MCF 10A (cell line): ENCODE measurements at regions of chr6 and their contacts with region 1.

Region 1: DNA sequence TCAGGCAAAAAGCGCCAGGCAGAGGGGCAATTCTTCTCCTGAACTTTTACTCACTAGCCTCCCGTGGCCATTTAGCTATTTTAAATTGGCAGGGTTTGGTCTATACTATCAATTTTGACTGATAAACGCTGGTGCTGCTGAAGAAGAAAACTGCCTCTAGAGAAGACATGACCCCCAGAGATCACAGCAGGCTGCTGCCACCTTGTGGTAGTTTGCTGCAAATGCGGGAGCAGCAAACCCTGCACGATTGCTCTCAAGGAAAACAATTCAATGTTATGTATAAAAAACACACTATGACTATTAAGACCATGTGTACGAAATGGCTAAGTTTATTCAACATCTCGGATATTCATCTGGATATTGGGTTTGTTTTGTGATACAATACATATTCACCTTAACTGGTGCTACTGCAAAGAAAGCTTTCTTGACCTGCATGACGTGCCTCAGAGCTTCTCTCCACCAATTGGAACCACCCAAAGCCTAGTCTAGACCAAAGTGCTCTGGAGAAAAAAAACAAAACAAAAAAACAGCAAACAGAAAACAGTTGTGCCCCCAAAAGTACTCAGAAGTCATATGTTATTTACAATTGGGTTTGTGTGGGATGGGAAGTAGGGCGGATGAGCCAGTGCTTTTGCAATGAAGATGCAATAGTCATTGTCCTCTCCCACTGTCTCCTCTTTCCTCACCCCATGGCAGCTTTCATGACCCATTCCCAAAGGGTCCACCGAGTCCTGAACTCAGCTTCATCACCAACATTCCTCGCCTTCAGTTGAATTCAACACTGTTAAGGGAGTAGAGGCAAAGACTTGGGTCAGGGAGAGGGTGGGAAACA is 19.6 kb upstream of the IL17F start:
- DNase-seq: peak; percentile 65
- H3K4me3 Mint-ChIP-seq: no peak overlapping the region
- H3K27ac Mint-ChIP-seq: peak overlapping the region; percentile 16
- H3K4me1 Mint-ChIP-seq: no peaks in the 10 kb centered on the region
- H3K27me3 Mint-ChIP-seq: no peaks in the 10 kb centered on the region
- CTCF ChIP-seq: peak; percentile 90

Region 2: GRCh38 chr6:52155791-52156576 is 107.9 kb before region 1 on chr6:
- CTCF ChIA-PET with region 1: interaction called, 178 read pairs
- POLR2A ChIA-PET with region 1: no interaction called
- intact Hi-C with region 1: no loop called
- DNase-seq: no peak
- H3K4me3 Mint-ChIP-seq: no peak overlapping the region
- H3K27ac Mint-ChIP-seq: no peak overlapping the region
- H3K4me1 Mint-ChIP-seq: peaks cover 31% of the 10 kb centered on the region
- H3K27me3 Mint-ChIP-seq: no peaks in the 10 kb centered on the region
- CTCF ChIP-seq: no peak

Region 3: GRCh38 chr6:52176550-52176949 is 87.4 kb before region 1 on chr6:
- CTCF ChIA-PET with region 1: interaction called, 14 read pairs
- POLR2A ChIA-PET with region 1: no interaction called
- intact Hi-C with region 1: no loop called
- DNase-seq: no peak
- H3K4me3 Mint-ChIP-seq: no peak overlapping the region
- H3K27ac Mint-ChIP-seq: no peak overlapping the region
- H3K4me1 Mint-ChIP-seq: no peaks in the 10 kb centered on the region
- H3K27me3 Mint-ChIP-seq: no peaks in the 10 kb centered on the region
- CTCF ChIP-seq: no peak

Region 4: GRCh38 chr6:52243282-52243893 is 20.5 kb before region 1 on chr6:
- CTCF ChIA-PET with region 1: interaction called, 48 read pairs
- POLR2A ChIA-PET with region 1: interaction called, 4 read pairs
- intact Hi-C with region 1: no loop called
- DNase-seq: peak; percentile 29
- H3K4me3 Mint-ChIP-seq: no peak overlapping the region
- H3K27ac Mint-ChIP-seq: no peak overlapping the region
- H3K4me1 Mint-ChIP-seq: no peaks in the 10 kb centered on the region
- H3K27me3 Mint-ChIP-seq: peaks cover 9% of the 10 kb centered on the region
- CTCF ChIP-seq: no peak

Region 5: DNA sequence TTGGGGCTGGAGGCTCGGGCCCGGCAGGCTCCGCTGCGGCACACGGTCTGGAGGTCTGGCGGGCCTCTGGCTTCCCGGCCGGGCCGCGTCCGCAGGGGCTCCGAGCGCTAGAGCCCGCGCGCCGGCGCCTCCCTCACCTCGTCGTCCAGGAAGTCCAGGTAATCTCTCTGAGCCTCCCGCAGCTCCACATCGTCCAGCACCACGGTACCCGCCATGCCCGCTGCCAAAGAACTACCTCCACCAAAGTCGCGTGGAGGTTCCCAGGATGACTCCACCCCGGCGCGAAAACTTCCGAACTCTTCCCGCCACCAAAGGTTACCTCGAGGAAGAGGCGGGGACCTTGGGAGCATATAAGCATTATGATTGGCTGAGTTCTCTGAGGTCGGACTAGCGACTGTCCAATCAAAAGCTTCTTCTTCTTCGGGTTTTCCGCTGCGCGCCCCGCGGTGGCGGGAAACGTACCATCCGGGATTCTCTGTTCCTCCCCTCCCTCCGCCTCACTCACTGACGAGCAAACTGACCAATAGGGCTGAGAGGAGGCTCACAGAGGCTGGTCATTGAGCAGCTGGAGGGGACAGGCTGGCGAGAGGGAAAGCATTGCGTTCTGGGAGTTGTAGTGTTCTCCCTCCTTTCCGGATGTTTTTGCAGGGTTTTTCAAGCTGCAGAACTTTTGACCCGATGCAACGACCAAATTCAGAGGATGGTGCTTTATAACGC is 20.7 kb after region 1 on chr6 and contains the start of gene MCM3:
- CTCF ChIA-PET with region 1: interaction called, 29 read pairs
- POLR2A ChIA-PET with region 1: interaction called, 4 read pairs
- intact Hi-C with region 1: no loop called
- DNase-seq: peak; percentile 99
- H3K4me3 Mint-ChIP-seq: no peak within 1 kb of the TSS
- H3K27ac Mint-ChIP-seq: peak within 1 kb of the TSS; percentile 43
- H3K4me1 Mint-ChIP-seq: peaks cover 12% of the 10 kb centered on the region
- H3K27me3 Mint-ChIP-seq: no peaks in the 10 kb centered on the region
- CTCF ChIP-seq: no peak
- total RNA-seq, gene MCM3: 16.3 and 24.9 TPM in 2 replicates